ENCODE measurements at regions of chr2 and their contacts with region 1.

Region 1: DNA sequence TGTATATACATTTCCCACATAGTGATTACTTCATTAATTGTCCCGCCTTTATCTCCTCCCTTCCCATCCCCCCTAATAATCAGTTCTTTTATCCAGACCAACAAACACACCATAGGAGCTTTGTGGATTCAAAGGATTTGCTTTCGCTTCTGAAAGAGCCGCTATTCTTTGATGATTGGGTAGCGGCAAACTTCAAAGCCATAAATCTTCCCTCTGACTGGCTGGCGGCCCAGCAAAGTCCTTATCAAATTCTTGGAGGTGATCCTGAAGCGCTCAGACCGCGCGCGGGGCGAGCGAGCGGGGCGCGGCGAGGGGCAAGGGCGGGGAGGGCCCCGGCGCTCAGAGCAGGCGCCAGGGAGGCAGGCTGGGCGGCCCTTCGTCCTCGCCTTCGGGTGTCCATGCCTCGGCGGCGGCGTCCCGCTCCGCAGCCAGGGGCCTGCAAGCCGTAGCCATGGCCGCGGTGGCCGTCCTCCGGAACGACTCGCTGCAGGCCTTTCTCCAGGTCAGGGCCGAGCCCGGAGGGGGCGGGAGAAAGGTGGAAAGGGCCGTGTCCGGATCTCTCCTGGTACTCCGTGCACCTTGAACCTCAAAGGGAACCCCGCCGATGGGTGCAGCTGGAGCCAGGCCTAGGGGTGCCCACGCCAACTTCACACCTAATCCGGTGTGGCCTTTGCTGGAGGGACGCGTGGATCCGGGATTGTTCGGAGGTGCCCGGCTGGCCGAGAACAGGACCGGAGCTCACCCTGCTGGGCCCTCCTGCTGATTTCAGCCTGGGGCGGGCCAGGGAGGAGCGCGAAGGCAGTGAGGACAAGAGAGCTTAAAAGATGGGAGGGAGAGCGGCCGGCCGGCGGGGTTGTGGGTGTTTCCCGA is at the start of gene SP5:
- DNase-seq: peak; percentile 71
- H3K4me3 ChIP-seq: peak within 1 kb of the TSS; percentile 36
- H3K27ac ChIP-seq: no peak within 1 kb of the TSS
- H3K4me1 ChIP-seq: peaks cover 26% of the 10 kb centered on the region
- H3K27me3 ChIP-seq: peaks cover 100% of the 10 kb centered on the region
- CTCF ChIP-seq: no peak
- total RNA-seq, gene SP5: not detected in 2 replicates

Region 2: GRCh38 chr2:170369894-170370293 is 345.4 kb before region 1 on chr2:
- CTCF ChIA-PET with region 1: no interaction called
- POLR2A ChIA-PET with region 1: no interaction called
- intact Hi-C with region 1: no loop called
- DNase-seq: peak; percentile 67
- H3K4me3 ChIP-seq: no peak overlapping the region
- H3K27ac ChIP-seq: no peak overlapping the region
- H3K4me1 ChIP-seq: no peaks in the 10 kb centered on the region
- H3K27me3 ChIP-seq: peaks cover 43% of the 10 kb centered on the region
- CTCF ChIP-seq: peak; percentile 54; the same call in 1 of the 2 replicates

Region 3: GRCh38 chr2:170409164-170409535 is 306.1 kb before region 1 on chr2:
- CTCF ChIA-PET with region 1: no interaction called
- POLR2A ChIA-PET with region 1: no interaction called
- intact Hi-C with region 1: loop called (anchors 10 kb)
- DNase-seq: peak; percentile 82
- H3K4me3 ChIP-seq: no peak overlapping the region
- H3K27ac ChIP-seq: no peak overlapping the region
- H3K4me1 ChIP-seq: no peaks in the 10 kb centered on the region
- H3K27me3 ChIP-seq: peaks cover 55% of the 10 kb centered on the region
- CTCF ChIP-seq: peak; percentile 92

Region 4: DNA sequence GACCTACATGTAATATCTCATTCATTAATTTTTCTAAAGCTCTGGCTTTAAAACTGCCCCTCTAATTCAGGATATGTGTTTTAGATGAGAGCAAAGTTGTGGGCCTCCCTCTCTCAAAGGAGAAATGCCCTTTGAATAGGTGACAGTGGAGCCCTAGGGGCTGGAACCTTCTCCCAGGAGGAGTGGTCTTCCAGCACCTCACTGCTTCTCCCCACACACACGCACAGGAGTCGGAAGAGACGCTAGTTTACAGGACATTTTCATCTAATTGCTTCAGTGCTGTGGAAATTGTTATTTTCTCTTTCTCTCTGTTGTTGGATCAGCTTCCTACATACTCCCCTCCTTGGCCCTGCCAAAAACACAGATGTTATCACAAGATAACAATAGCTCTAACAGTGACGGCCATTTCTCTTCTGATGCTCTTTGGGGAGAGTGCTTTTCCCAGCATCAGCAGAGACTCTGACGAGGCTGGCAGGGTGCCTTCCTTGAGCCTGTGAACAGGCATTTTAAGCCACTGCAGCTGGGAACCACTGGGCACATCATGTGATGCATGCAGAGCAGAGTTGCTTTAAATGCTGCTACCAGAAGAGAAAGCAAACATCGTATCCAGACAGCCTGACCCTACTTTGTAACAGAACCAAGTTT is 209.5 kb before region 1 on chr2:
- CTCF ChIA-PET with region 1: no interaction called
- POLR2A ChIA-PET with region 1: no interaction called
- intact Hi-C with region 1: loop called (anchors 10 kb)
- DNase-seq: peak; percentile 13
- H3K4me3 ChIP-seq: no peak overlapping the region
- H3K27ac ChIP-seq: no peak overlapping the region
- H3K4me1 ChIP-seq: peaks cover 45% of the 10 kb centered on the region
- H3K27me3 ChIP-seq: no peaks in the 10 kb centered on the region
- CTCF ChIP-seq: no peak

Measured in A673 (cell line).